B cell (primary cell): ENCODE measurements at regions of chr17 and their contacts with region 1.

Region 1: GRCh38 chr17:82494236-82495055 is 25.1 kb upstream of the FOXK2 start:
- DNase-seq: peak; percentile 94
- ATAC-seq: peak; percentile 73
- H3K4me3 ChIP-seq: no peak overlapping the region
- H3K4me3 Mint-ChIP-seq: peak overlapping the region; percentile 77
- H3K27ac ChIP-seq: peak overlapping the region; percentile 7 to 25
- H3K27ac Mint-ChIP-seq: peak overlapping the region; percentile 97
- H3K4me1 ChIP-seq: peaks cover 7 to 39% of the 10 kb centered on the region in 2 donors
- H3K4me1 Mint-ChIP-seq: peaks cover 28% of the 10 kb centered on the region
- H3K27me3 ChIP-seq: no peaks in the 10 kb centered on the region
- H3K27me3 Mint-ChIP-seq: no peaks in the 10 kb centered on the region
- CTCF ChIP-seq: peak; percentile 83

Region 2: GRCh38 chr17:82351716-82352488 is 142.5 kb before region 1 on chr17:
- CTCF ChIA-PET with region 1: interaction called, 8 read pairs
- POLR2A ChIA-PET with region 1: no interaction called
- intact Hi-C with region 1: loop called (anchors 1 kb)
- DNase-seq: peak; percentile 89
- ATAC-seq: peak; percentile 90
- H3K4me3 ChIP-seq: no peak overlapping the region
- H3K4me3 Mint-ChIP-seq: no peak overlapping the region
- H3K27ac ChIP-seq: no peak overlapping the region
- H3K27ac Mint-ChIP-seq: no peak overlapping the region
- H3K4me1 ChIP-seq: peaks cover 10 to 14% of the 10 kb centered on the region in 2 donors
- H3K4me1 Mint-ChIP-seq: peaks cover 5% of the 10 kb centered on the region
- H3K27me3 ChIP-seq: peaks cover 0 to 27% (median 6%) of the 10 kb centered on the region in 4 experiments
- H3K27me3 Mint-ChIP-seq: peaks cover 13% of the 10 kb centered on the region
- CTCF ChIP-seq: peak; percentile 97

Region 3: DNA sequence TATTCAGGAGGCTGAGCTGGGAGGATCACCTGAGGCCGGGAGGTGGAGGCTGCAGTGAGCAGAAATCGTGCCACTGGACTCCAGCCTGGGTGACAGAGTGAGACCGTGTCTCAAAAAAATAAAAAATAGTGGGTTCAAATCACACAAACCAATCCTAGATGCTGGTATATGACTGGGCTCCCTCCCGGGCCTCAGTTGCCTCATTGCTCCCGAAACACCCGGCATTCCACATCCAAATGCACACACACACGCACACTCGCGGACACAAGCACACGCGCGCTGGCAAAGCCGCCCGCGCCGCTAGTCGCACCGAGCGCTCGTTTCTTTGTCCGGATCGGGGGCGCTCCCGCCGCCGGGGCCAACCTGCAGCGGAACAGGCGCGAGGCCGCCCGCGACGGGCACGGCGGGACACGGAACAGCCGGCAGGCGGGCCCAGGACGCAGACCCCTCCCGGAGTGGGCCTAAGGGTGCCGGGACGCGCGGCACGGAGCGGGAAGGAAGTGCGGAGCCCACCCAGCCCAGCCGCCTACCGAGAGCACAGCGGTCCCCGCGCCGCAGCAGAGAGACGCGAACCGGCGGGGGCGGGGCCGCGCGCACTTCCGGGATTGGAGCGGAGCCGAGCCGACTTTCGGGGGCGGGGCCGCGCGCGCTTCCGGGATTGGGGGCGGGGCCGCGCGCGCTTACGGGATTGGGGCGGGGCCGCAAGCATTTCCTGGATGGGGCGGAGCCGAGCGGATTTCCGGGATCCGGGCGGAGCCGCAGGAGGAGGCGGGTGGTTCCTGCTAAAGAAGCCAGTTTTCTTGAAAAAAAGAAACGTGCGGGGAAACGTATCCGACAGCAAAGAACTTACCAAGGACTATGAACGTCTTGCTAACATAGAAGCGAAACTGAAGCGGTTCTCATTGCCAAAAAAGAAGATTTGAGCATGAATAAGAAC is 44.0 kb before region 1 on chr17 and contains the start of gene CYBC1:
- CTCF ChIA-PET with region 1: interaction called, 3 read pairs
- POLR2A ChIA-PET with region 1: interaction called, 10 read pairs
- intact Hi-C with region 1: loop called (anchors 1 kb)
- DNase-seq: peak; percentile 97
- ATAC-seq: peak; percentile 55
- H3K4me3 ChIP-seq: peak within 1 kb of the TSS; percentile 81 to 99 (median 93)
- H3K4me3 Mint-ChIP-seq: peak within 1 kb of the TSS; percentile 88
- H3K27ac ChIP-seq: peak within 1 kb of the TSS; percentile 95 to 99
- H3K27ac Mint-ChIP-seq: peak within 1 kb of the TSS; percentile 96
- H3K4me1 ChIP-seq: peaks cover 17 to 47% of the 10 kb centered on the region in 2 donors
- H3K4me1 Mint-ChIP-seq: peaks cover 40% of the 10 kb centered on the region
- H3K27me3 ChIP-seq: no peaks in the 10 kb centered on the region
- H3K27me3 Mint-ChIP-seq: no peaks in the 10 kb centered on the region
- CTCF ChIP-seq: no peak
- total RNA-seq, gene CYBC1: 569 and 578 TPM in 2 replicates

Region 4: DNA sequence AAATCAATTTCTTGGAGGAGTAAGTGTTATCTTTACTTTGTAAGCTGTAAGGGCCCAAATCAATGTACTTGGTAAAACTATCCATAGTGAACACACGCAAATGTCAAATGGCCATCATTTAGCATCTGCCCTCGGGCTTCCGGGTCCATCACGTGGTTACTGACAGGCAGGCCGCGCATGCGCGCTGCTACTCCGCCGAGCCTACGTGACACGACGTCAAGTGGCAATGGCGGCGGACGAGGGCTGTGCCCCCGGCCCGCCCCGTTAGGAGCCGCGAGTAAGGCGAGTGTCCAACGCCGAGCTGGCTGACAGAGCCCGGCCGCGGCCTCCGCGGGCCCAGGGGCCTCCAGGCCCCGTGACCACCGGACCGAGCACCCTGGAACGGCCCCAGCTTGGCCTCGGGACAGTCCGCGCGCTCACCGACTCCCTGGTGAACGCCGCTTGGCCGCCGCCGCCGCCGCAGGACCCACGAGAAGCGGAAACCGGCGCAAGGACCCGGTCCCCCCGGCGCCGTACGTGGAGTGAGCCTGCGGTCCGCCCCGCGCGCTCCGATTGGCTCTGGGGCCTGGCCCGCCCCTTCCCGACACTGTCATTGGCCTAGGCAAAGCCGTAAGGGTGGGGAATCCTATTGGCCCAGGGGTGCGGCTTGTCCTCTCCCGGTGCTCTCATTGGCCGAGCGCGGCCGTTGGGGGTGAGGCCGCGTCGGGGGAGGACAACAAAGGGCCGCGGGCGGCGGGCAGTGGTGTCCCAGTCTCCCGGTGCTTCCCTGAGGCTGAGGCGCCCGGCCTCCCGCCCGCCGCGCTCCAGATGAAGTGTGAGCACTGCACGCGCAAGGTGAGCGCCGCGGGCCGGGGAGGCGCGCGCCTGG is 36.2 kb before region 1 on chr17 and contains the start of gene NARF:
- CTCF ChIA-PET with region 1: no interaction called
- POLR2A ChIA-PET with region 1: no interaction called
- intact Hi-C with region 1: loop called (anchors 1 kb)
- DNase-seq: peak; percentile 97
- ATAC-seq: peak; percentile 96
- H3K4me3 ChIP-seq: peak within 1 kb of the TSS; percentile 53 to 82 (median 74)
- H3K4me3 Mint-ChIP-seq: peak within 1 kb of the TSS; percentile 81
- H3K27ac ChIP-seq: peak within 1 kb of the TSS; percentile 91 to 99
- H3K27ac Mint-ChIP-seq: peak within 1 kb of the TSS; percentile 90
- H3K4me1 ChIP-seq: peaks cover 13 to 19% of the 10 kb centered on the region in 2 donors
- H3K4me1 Mint-ChIP-seq: peaks cover 19% of the 10 kb centered on the region
- H3K27me3 ChIP-seq: no peaks in the 10 kb centered on the region
- H3K27me3 Mint-ChIP-seq: no peaks in the 10 kb centered on the region
- CTCF ChIP-seq: no peak
- total RNA-seq, gene NARF: 103 and 104 TPM in 2 replicates

Region 5: GRCh38 chr17:82507631-82508175 is 13.3 kb after region 1 on chr17:
- CTCF ChIA-PET with region 1: interaction called, 5 read pairs
- POLR2A ChIA-PET with region 1: interaction called, 10 read pairs
- intact Hi-C with region 1: loop called (anchors 1 kb)
- DNase-seq: no peak
- ATAC-seq: no peak
- H3K4me3 ChIP-seq: no peak overlapping the region
- H3K4me3 Mint-ChIP-seq: peak overlapping the region; percentile 12
- H3K27ac ChIP-seq: no peak overlapping the region
- H3K27ac Mint-ChIP-seq: peak overlapping the region; percentile 33
- H3K4me1 ChIP-seq: peaks cover 3 to 13% of the 10 kb centered on the region in 2 donors
- H3K4me1 Mint-ChIP-seq: peaks cover 17% of the 10 kb centered on the region
- H3K27me3 ChIP-seq: no peaks in the 10 kb centered on the region
- H3K27me3 Mint-ChIP-seq: no peaks in the 10 kb centered on the region
- CTCF ChIP-seq: no peak

Region 6: DNA sequence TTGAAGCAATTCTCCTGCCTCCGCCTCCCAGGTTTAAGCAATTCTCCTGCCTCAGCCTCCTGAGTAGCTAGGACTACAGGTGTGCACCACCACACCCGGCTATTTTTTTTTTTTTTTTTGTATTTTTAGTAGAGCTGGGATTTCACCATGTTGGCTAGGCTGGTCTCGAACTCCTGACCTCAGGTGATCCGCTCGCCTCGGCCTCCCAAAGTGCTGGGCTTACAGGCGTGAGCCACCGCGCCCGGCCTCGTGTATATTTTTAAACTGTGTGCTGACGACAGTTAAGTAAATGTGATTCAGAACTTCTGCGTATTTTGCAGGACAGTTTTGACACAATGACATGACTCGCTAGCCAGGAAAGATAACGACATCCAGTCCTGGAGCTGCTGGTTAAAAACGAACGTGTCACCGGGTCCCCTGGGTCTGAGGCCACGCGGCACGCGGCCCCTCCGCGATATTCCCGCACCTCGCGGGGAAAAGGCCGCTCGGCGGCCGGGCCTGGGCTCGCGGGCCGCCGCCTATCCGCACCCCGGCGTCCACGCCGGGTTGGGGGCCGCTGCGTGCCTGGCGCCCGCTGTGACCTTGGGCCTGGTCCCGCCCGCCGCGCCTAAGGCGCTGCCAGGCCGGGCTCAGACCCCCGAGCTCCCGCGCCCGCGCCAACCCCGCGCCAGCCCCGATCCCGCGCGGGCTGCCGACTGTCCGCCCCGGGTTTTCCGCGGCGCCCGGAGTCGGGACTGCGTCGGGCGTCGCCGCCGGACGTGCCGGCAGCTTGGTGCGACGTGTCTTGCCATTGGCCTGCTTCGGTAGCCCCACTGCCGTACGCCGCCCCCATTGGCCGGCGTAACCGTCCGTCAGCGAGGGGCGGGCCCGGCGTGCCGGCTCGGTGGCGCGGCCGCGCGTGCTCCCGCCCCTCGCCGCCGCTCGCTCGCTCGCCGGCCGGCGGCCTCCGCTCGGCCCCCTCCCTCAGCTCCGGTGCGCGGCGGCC is 24.7 kb after region 1 on chr17 and contains the start of gene FOXK2:
- CTCF ChIA-PET with region 1: interaction called, 5 read pairs
- POLR2A ChIA-PET with region 1: interaction called, 5 read pairs
- intact Hi-C with region 1: loop called (anchors 1 kb)
- DNase-seq: peak; percentile 96
- ATAC-seq: peak; percentile 97
- H3K4me3 ChIP-seq: peak within 1 kb of the TSS; percentile 50 to 71 (median 64)
- H3K4me3 Mint-ChIP-seq: peak within 1 kb of the TSS; percentile 88
- H3K27ac ChIP-seq: peak within 1 kb of the TSS; percentile 72 to 82
- H3K27ac Mint-ChIP-seq: peak within 1 kb of the TSS; percentile 87
- H3K4me1 ChIP-seq: peaks cover 8 to 23% of the 10 kb centered on the region in 2 donors
- H3K4me1 Mint-ChIP-seq: peaks cover 20% of the 10 kb centered on the region
- H3K27me3 ChIP-seq: no peaks in the 10 kb centered on the region
- H3K27me3 Mint-ChIP-seq: no peaks in the 10 kb centered on the region
- CTCF ChIP-seq: no peak
- total RNA-seq, gene FOXK2: 62.7 and 64.3 TPM in 2 replicates

Region 7: GRCh38 chr17:82565551-82565950 is 71.1 kb after region 1 on chr17:
- CTCF ChIA-PET with region 1: no interaction called
- POLR2A ChIA-PET with region 1: no interaction called
- intact Hi-C with region 1: no loop called
- DNase-seq: no peak
- ATAC-seq: no peak
- H3K4me3 ChIP-seq: no peak overlapping the region
- H3K4me3 Mint-ChIP-seq: no peak overlapping the region
- H3K27ac ChIP-seq: no peak overlapping the region
- H3K27ac Mint-ChIP-seq: no peak overlapping the region
- H3K4me1 ChIP-seq: no peaks in the 10 kb centered on the region
- H3K4me1 Mint-ChIP-seq: peaks cover 6% of the 10 kb centered on the region
- H3K27me3 ChIP-seq: no peaks in the 10 kb centered on the region
- H3K27me3 Mint-ChIP-seq: no peaks in the 10 kb centered on the region
- CTCF ChIP-seq: no peak

Region 8: GRCh38 chr17:82611140-82612058 is 117.0 kb after region 1 on chr17:
- CTCF ChIA-PET with region 1: no interaction called
- POLR2A ChIA-PET with region 1: no interaction called
- intact Hi-C with region 1: no loop called
- DNase-seq: no peak
- ATAC-seq: no peak
- H3K4me3 ChIP-seq: no peak overlapping the region
- H3K4me3 Mint-ChIP-seq: no peak overlapping the region
- H3K27ac ChIP-seq: no peak overlapping the region
- H3K27ac Mint-ChIP-seq: no peak overlapping the region
- H3K4me1 ChIP-seq: no peaks in the 10 kb centered on the region
- H3K4me1 Mint-ChIP-seq: no peaks in the 10 kb centered on the region
- H3K27me3 ChIP-seq: no peaks in the 10 kb centered on the region
- H3K27me3 Mint-ChIP-seq: no peaks in the 10 kb centered on the region
- CTCF ChIP-seq: no peak